Keratinocyte (primary cell): ENCODE measurements at regions of chr12 and their contacts with region 1.

Region 1: GRCh38 chr12:64587447-64587846 is 22.8 kb upstream of the RASSF3 start:
- DNase-seq: no peak
- H3K4me3 ChIP-seq: no peak overlapping the region
- H3K27ac ChIP-seq: no peak overlapping the region
- H3K4me1 ChIP-seq: no peaks in the 10 kb centered on the region
- H3K27me3 ChIP-seq: peaks cover 6% of the 10 kb centered on the region
- CTCF ChIP-seq: peak in 1 of 3 experiments; percentile 11

Region 2: GRCh38 chr12:64522316-64522715 is 65.1 kb before region 1 on chr12:
- dilution Hi-C with region 1: loop called (anchors 5 kb)
- DNase-seq: no peak
- H3K4me3 ChIP-seq: no peak overlapping the region
- H3K27ac ChIP-seq: no peak overlapping the region
- H3K4me1 ChIP-seq: peaks cover 4% of the 10 kb centered on the region
- H3K27me3 ChIP-seq: no peaks in the 10 kb centered on the region
- CTCF ChIP-seq: no peak